Naive thymus-derived CD4-positive, alpha-beta T cell (primary cell): ENCODE measurements at regions of chr2 and their contacts with region 1.

Region 1: DNA sequence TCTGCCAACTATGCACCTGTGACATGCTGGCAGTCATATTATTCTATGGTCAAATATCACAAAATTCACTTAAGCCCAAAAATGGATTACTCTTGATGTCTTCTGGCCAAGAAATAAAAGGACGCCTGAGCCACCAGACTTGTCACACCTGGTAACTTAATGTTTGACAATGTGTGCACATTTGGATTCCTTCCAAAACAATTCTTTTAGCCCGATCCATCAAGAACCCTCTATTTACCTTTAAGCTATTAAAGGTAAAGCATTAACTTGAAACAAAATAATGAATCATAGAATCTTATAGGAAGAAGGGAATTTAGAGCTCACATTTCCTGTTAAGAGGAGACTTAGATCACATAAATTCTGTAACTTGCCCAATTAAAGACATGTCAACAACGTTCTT is 46.5 kb upstream of the NFU1 start:
- DNase-seq: no peak
- ATAC-seq: no peak
- H3K4me3 ChIP-seq: no peak overlapping the region
- H3K4me3 Mint-ChIP-seq: no peak overlapping the region
- H3K27ac ChIP-seq: no peak overlapping the region
- H3K27ac Mint-ChIP-seq: peak overlapping the region in 6 of 9 donors; percentile 1 to 65 (median 50)
- H3K4me1 ChIP-seq: peaks cover 0 to 2% of the 10 kb centered on the region in 2 donors
- H3K4me1 Mint-ChIP-seq: peaks cover 0 to 40% (median 15%) of the 10 kb centered on the region in 7 donors
- H3K27me3 ChIP-seq: no peaks in the 10 kb centered on the region
- H3K27me3 Mint-ChIP-seq: no peaks in the 10 kb centered on the region

Region 2: GRCh38 chr2:69499242-69499641 is 15.5 kb after region 1 on chr2:
- CTCF ChIA-PET with region 1: no interaction called
- POLR2A ChIA-PET with region 1: no interaction called
- intact Hi-C with region 1: loop called in 1 of 2 experiments (anchors 1 kb)
- DNase-seq: no peak
- ATAC-seq: peak; percentile 65
- H3K4me3 ChIP-seq: no peak overlapping the region
- H3K4me3 Mint-ChIP-seq: peak overlapping the region in 1 of 10 donors; percentile 7
- H3K27ac ChIP-seq: peak overlapping the region; percentile 61
- H3K27ac Mint-ChIP-seq: peak overlapping the region; percentile 9 to 94 (median 89)
- H3K4me1 ChIP-seq: peaks cover 0 to 15% of the 10 kb centered on the region in 2 donors
- H3K4me1 Mint-ChIP-seq: peaks cover 18 to 41% (median 26%) of the 10 kb centered on the region in 7 donors
- H3K27me3 ChIP-seq: no peaks in the 10 kb centered on the region
- H3K27me3 Mint-ChIP-seq: no peaks in the 10 kb centered on the region